CD8-positive, alpha-beta memory T cell (primary cell): ENCODE measurements at regions of chr11 and their contacts with region 1.

Region 1: DNA sequence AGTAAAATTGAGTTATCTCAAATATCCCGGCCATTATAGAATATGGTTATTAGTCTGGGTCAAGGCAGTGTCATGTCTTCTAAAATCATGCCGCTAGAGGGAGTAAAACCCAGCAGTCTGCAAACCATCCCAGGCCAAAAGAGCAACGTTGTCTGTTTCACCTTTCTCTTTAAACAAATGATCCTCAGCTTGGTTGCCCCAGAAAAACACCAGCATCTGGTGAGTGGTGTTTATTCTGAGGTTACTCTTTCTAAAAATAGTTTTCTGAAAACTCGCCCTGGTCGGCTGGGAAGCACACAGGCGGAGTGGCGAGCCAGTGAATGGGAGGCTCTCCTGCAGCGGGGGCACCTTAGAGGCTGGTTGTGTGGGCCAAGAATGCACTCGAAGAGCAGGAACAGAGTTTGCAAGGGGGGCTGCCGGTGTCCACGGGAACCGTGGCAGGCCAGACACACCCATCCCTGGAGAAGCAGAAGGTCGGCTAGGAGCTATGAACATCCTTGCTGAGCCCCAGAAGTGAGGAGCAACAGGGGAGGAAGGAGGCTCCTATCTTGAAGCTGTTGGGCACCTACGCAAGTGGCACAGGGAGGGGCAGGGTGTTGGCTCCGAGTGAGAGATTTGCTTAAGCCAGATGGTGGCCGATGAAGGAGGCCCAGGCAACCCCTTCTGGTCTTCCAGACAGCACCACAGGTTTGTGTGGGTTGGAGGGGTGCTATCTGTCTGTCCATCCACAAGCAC is 297.1 kb downstream of the ETS1 start:
- DNase-seq: peak; percentile 41 to 84 (median 80)
- H3K4me3 ChIP-seq: peak overlapping the region; percentile 58
- H3K4me3 Mint-ChIP-seq: peak overlapping the region; percentile 88 to 97 (median 93)
- H3K27ac ChIP-seq: peak overlapping the region; percentile 85
- H3K27ac Mint-ChIP-seq: peak overlapping the region; percentile 98 to 100 (median 99)
- H3K4me1 ChIP-seq: peaks cover 84% of the 10 kb centered on the region
- H3K4me1 Mint-ChIP-seq: peaks cover 89 to 99% (median 98%) of the 10 kb centered on the region in 3 donors
- H3K27me3 ChIP-seq: no peaks in the 10 kb centered on the region
- H3K27me3 Mint-ChIP-seq: no peaks in the 10 kb centered on the region

Region 2: DNA sequence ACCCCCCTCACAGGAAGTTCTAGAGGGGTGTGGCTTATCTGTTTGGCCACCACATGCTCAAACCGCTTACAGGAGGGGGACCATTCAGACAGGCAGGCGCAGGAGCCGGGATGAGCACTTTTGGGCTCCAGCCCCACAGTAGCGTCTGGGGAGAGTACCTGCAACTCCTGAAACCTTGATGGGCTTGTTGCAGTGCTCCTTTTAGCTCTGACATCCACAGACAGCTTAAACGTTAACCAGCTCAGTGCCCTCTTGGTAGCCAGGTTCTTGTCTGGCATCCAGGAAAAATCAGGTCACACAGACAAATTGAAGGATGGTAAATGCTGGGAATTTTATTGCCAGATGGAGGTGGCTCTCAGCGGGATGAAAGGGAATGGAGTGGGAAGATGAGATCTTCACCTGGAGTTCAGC is 29.3 kb before region 1 on chr11:
- CTCF ChIA-PET with region 1: no interaction called
- POLR2A ChIA-PET with region 1: no interaction called
- DNase-seq: no peak
- H3K4me3 ChIP-seq: no peak overlapping the region
- H3K4me3 Mint-ChIP-seq: no peak overlapping the region
- H3K27ac ChIP-seq: no peak overlapping the region
- H3K27ac Mint-ChIP-seq: no peak overlapping the region
- H3K4me1 ChIP-seq: no peaks in the 10 kb centered on the region
- H3K4me1 Mint-ChIP-seq: peaks cover 0 to 10% (median 1%) of the 10 kb centered on the region in 3 donors
- H3K27me3 ChIP-seq: no peaks in the 10 kb centered on the region
- H3K27me3 Mint-ChIP-seq: no peaks in the 10 kb centered on the region

Region 3: GRCh38 chr11:128302425-128303186 is 12.3 kb after region 1 on chr11:
- CTCF ChIA-PET with region 1: interaction called, 40 read pairs
- POLR2A ChIA-PET with region 1: interaction called, 33 read pairs
- DNase-seq: peak; percentile 41 to 92 (median 90)
- H3K4me3 ChIP-seq: peak overlapping the region; percentile 76
- H3K4me3 Mint-ChIP-seq: peak overlapping the region; percentile 88 to 96 (median 92)
- H3K27ac ChIP-seq: peak overlapping the region; percentile 92
- H3K27ac Mint-ChIP-seq: peak overlapping the region; percentile 94 to 100 (median 98)
- H3K4me1 ChIP-seq: peaks cover 97% of the 10 kb centered on the region
- H3K4me1 Mint-ChIP-seq: peaks cover 82 to 98% (median 96%) of the 10 kb centered on the region in 3 donors
- H3K27me3 ChIP-seq: no peaks in the 10 kb centered on the region
- H3K27me3 Mint-ChIP-seq: no peaks in the 10 kb centered on the region

Region 4: DNA sequence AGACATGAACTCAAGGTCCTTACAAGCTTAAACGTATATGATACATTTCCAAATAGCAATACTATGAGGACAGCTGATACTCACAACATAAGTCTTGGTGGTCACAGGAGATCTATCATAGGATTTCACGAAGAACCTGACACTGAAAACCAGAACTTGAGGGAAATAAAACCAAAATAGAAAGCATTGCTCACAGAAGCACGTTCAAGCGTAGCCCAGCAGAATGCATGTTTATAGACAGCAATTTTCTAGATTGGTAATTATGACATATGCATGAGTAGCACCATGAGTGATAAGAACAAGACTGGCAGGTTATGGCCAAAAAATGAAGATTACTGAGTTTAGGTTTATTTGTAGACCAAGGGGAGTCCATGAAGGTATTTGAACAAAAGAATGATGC is 53.6 kb after region 1 on chr11:
- CTCF ChIA-PET with region 1: no interaction called
- POLR2A ChIA-PET with region 1: no interaction called
- DNase-seq: no peak
- H3K4me3 ChIP-seq: no peak overlapping the region
- H3K4me3 Mint-ChIP-seq: peak overlapping the region in 5 of 7 donors; percentile 2 to 38 (median 17)
- H3K27ac ChIP-seq: no peak overlapping the region
- H3K27ac Mint-ChIP-seq: peak overlapping the region in 7 of 8 donors; percentile 76 to 97 (median 91)
- H3K4me1 ChIP-seq: peaks cover 67% of the 10 kb centered on the region
- H3K4me1 Mint-ChIP-seq: peaks cover 62 to 89% (median 85%) of the 10 kb centered on the region in 3 donors
- H3K27me3 ChIP-seq: no peaks in the 10 kb centered on the region
- H3K27me3 Mint-ChIP-seq: no peaks in the 10 kb centered on the region

Region 5: DNA sequence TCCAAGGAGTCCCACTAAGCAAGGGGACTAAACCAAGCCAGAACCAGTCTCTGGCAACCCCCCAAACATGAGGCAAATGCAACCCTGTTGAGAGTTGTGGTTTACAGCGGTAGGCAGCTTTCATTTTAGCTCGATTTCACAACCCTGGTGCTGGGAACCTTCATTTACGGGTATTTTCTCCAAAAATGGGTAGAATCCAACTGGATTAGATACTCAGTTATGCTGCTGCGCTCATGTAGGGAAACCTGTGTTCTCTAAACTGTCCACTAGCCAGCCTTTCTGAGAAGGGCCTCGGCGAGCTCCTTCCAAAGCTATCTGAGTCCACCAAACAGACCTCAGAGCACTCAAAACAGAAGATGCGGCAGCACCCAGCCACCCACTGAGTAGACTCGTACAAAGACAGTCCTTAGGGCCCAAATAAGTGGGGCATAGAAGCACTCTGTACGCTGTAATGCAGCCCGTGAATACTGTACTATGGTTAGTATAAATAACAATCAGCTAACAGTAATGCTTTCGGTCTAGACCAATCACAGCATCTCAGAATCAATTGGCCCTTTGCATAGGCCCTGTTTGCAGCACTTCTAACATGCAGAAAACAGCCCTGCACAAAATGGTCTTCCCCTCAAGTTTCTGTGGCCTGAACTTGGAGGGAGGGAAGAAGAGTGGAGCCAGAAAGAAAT is 192.4 kb after region 1 on chr11:
- CTCF ChIA-PET with region 1: interaction called, 12 read pairs
- POLR2A ChIA-PET with region 1: interaction called, 3 read pairs
- DNase-seq: peak in 4 of 5 donors; percentile 57 to 83 (median 78)
- H3K4me3 ChIP-seq: peak overlapping the region; percentile 44
- H3K4me3 Mint-ChIP-seq: peak overlapping the region; percentile 72 to 89 (median 81)
- H3K27ac ChIP-seq: peak overlapping the region; percentile 52
- H3K27ac Mint-ChIP-seq: peak overlapping the region; percentile 82 to 99 (median 96)
- H3K4me1 ChIP-seq: peaks cover 96% of the 10 kb centered on the region
- H3K4me1 Mint-ChIP-seq: peaks cover 96 to 99% (median 97%) of the 10 kb centered on the region in 3 donors
- H3K27me3 ChIP-seq: no peaks in the 10 kb centered on the region
- H3K27me3 Mint-ChIP-seq: peaks cover 0 to 2% of the 10 kb centered on the region in 2 donors

Region 6: GRCh38 chr11:128506999-128507611 is 216.8 kb after region 1 on chr11:
- CTCF ChIA-PET with region 1: interaction called, 12 read pairs
- POLR2A ChIA-PET with region 1: interaction called, 6 read pairs
- DNase-seq: no peak
- H3K4me3 ChIP-seq: peak overlapping the region; percentile 97
- H3K4me3 Mint-ChIP-seq: peak overlapping the region; percentile 81 to 99 (median 98)
- H3K27ac ChIP-seq: peak overlapping the region; percentile 48
- H3K27ac Mint-ChIP-seq: peak overlapping the region; percentile 93 to 99 (median 98)
- H3K4me1 ChIP-seq: peaks cover 99% of the 10 kb centered on the region
- H3K4me1 Mint-ChIP-seq: peaks cover 99 to 100% (median 100%) of the 10 kb centered on the region in 3 donors
- H3K27me3 ChIP-seq: no peaks in the 10 kb centered on the region
- H3K27me3 Mint-ChIP-seq: no peaks in the 10 kb centered on the region

Region 7: GRCh38 chr11:128624269-128625175 is 334.2 kb after region 1 on chr11:
- CTCF ChIA-PET with region 1: interaction called, 94 read pairs
- POLR2A ChIA-PET with region 1: interaction called, 24 read pairs
- DNase-seq: peak; percentile 55 to 87 (median 71)
- H3K4me3 ChIP-seq: peak overlapping the region; percentile 44
- H3K4me3 Mint-ChIP-seq: peak overlapping the region; percentile 75 to 88 (median 77)
- H3K27ac ChIP-seq: peak overlapping the region; percentile 59
- H3K27ac Mint-ChIP-seq: peak overlapping the region; percentile 93 to 99 (median 98)
- H3K4me1 ChIP-seq: peaks cover 67% of the 10 kb centered on the region
- H3K4me1 Mint-ChIP-seq: peaks cover 90 to 100% (median 99%) of the 10 kb centered on the region in 3 donors
- H3K27me3 ChIP-seq: no peaks in the 10 kb centered on the region
- H3K27me3 Mint-ChIP-seq: peaks cover 0 to 2% of the 10 kb centered on the region in 2 donors